B cell (primary cell): ENCODE measurements at regions of chr1 and their contacts with region 1.

Region 1: GRCh38 chr1:167430134-167430856 is 88.0 kb downstream of the CD247 start:
- DNase-seq: peak; percentile 57
- ATAC-seq: peak; percentile 40
- H3K4me3 ChIP-seq: peak overlapping the region in 2 of 5 experiments; percentile 16 to 25
- H3K4me3 Mint-ChIP-seq: peak overlapping the region; percentile 84
- H3K27ac ChIP-seq: peak overlapping the region; percentile 71
- H3K27ac Mint-ChIP-seq: peak overlapping the region; percentile 97
- H3K4me1 ChIP-seq: peaks cover 37 to 54% of the 10 kb centered on the region in 2 donors
- H3K4me1 Mint-ChIP-seq: peaks cover 50% of the 10 kb centered on the region
- H3K27me3 ChIP-seq: peaks cover 0 to under 1% (median under 1%) of the 10 kb centered on the region in 4 experiments
- H3K27me3 Mint-ChIP-seq: no peaks in the 10 kb centered on the region
- CTCF ChIP-seq: no peak

Region 2: GRCh38 chr1:167373398-167373797 is 56.9 kb before region 1 on chr1:
- CTCF ChIA-PET with region 1: no interaction called
- POLR2A ChIA-PET with region 1: no interaction called
- intact Hi-C with region 1: no loop called
- DNase-seq: no peak
- ATAC-seq: no peak
- H3K4me3 ChIP-seq: no peak overlapping the region
- H3K4me3 Mint-ChIP-seq: no peak overlapping the region
- H3K27ac ChIP-seq: peak overlapping the region in 1 of 2 donors; percentile 3
- H3K27ac Mint-ChIP-seq: no peak overlapping the region
- H3K4me1 ChIP-seq: no peaks in the 10 kb centered on the region
- H3K4me1 Mint-ChIP-seq: no peaks in the 10 kb centered on the region
- H3K27me3 ChIP-seq: no peaks in the 10 kb centered on the region
- H3K27me3 Mint-ChIP-seq: no peaks in the 10 kb centered on the region
- CTCF ChIP-seq: no peak

Region 3: DNA sequence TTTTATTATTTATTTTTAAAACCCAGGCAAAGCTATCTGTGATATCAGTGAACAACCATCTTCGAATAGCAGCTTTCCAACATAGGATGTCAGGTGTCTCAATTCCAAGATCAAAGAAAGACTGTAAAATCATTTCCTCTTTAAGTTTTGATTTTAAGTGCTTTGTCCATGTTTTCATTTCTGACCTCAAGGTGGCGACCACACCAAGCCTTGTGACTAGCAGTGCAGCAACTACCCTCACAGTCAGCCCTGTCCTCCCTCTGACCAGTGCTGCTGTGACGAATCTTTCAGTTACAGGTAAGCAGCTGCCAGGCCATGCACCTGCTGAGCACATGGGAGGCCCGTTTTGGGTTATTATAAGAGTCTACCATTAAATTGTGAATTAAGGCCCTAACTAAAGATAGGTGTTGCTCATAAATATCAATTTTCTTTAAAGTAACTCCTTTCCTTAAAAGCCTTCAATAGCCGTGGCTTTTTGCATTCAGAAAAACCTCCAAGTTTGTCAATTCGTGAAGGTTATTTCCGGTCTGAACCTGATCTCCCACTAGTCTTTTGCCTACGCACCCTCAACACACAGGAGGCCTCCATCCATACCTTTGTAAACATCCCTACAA is 28.9 kb before region 1 on chr1:
- CTCF ChIA-PET with region 1: interaction called, 30 read pairs
- POLR2A ChIA-PET with region 1: no interaction called
- intact Hi-C with region 1: no loop called
- DNase-seq: peak; percentile 70
- ATAC-seq: peak; percentile 76
- H3K4me3 ChIP-seq: no peak overlapping the region
- H3K4me3 Mint-ChIP-seq: no peak overlapping the region
- H3K27ac ChIP-seq: no peak overlapping the region
- H3K27ac Mint-ChIP-seq: peak overlapping the region; percentile 18
- H3K4me1 ChIP-seq: no peaks in the 10 kb centered on the region
- H3K4me1 Mint-ChIP-seq: no peaks in the 10 kb centered on the region
- H3K27me3 ChIP-seq: no peaks in the 10 kb centered on the region
- H3K27me3 Mint-ChIP-seq: no peaks in the 10 kb centered on the region
- CTCF ChIP-seq: peak; percentile 82

Region 4: GRCh38 chr1:167416506-167416905 is 13.8 kb before region 1 on chr1:
- CTCF ChIA-PET with region 1: interaction called, 7 read pairs
- POLR2A ChIA-PET with region 1: interaction called, 3 read pairs
- intact Hi-C with region 1: loop called (anchors 2 kb)
- DNase-seq: no peak
- ATAC-seq: no peak
- H3K4me3 ChIP-seq: no peak overlapping the region
- H3K4me3 Mint-ChIP-seq: no peak overlapping the region
- H3K27ac ChIP-seq: no peak overlapping the region
- H3K27ac Mint-ChIP-seq: no peak overlapping the region
- H3K4me1 ChIP-seq: peaks cover 7 to 13% of the 10 kb centered on the region in 2 donors
- H3K4me1 Mint-ChIP-seq: peaks cover 24% of the 10 kb centered on the region
- H3K27me3 ChIP-seq: no peaks in the 10 kb centered on the region
- H3K27me3 Mint-ChIP-seq: no peaks in the 10 kb centered on the region
- CTCF ChIP-seq: no peak

Region 5: DNA sequence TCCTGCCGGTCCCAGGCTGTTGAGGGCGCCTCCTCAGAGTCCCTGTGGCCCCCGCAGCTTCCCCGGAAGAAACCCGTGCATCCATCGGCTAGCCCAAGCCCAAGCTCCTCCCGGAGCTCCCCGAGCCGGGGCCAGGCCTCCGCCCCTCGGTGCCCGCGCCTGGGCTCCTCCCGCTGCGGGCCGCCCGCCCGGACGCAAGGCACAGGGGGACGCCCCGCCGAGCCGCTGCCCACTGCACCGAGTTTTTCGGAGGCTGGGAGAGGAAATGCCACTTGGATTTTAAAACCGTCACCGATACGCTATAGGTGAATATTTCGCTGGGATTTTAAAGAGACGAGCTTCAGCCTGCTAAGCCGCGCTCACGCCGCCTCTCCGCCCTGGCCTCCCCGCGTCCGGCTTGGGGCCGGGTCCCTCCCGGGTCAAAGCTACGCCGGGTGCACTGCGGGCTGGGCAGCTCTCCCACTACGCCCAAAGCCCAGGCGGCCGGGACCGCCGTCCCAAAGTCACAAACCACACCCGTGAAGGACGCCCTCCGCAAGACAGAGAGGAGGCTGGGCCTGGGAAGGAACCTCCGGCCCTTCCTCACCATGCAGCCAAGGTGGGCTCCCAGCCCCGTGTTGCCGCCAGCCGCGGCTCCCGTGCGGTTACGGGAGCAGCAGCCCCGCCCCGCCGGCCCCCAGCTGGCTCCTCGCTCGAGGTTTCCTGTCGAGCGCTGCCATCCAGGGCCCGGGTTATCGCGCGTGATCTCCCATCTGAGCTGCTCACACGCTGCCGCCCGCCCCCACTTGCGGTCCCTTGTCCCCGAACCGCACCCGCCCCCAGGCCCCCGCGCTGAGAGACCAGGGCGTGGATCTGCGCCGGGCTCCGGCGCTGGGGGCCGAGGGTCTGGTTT is 24.8 kb after region 1 on chr1:
- CTCF ChIA-PET with region 1: interaction called, 3 read pairs
- POLR2A ChIA-PET with region 1: no interaction called
- intact Hi-C with region 1: loop called (anchors 2 kb)
- DNase-seq: peak; percentile 78
- ATAC-seq: peak; percentile 78
- H3K4me3 ChIP-seq: peak overlapping the region; percentile 50 to 82 (median 77)
- H3K4me3 Mint-ChIP-seq: peak overlapping the region; percentile 79
- H3K27ac ChIP-seq: peak overlapping the region in 1 of 2 donors; percentile 66
- H3K27ac Mint-ChIP-seq: no peak overlapping the region
- H3K4me1 ChIP-seq: peaks cover 3 to 23% of the 10 kb centered on the region in 2 donors
- H3K4me1 Mint-ChIP-seq: peaks cover 14% of the 10 kb centered on the region
- H3K27me3 ChIP-seq: peaks cover 0 to 6% (median 0%) of the 10 kb centered on the region in 4 experiments
- H3K27me3 Mint-ChIP-seq: peaks cover 4% of the 10 kb centered on the region
- CTCF ChIP-seq: no peak

Region 6: GRCh38 chr1:167499664-167500101 is 69.4 kb after region 1 on chr1:
- CTCF ChIA-PET with region 1: no interaction called
- POLR2A ChIA-PET with region 1: no interaction called
- intact Hi-C with region 1: loop called (anchors 1 kb)
- DNase-seq: peak; percentile 88
- ATAC-seq: peak; percentile 98
- H3K4me3 ChIP-seq: peak overlapping the region in 1 of 5 experiments; percentile 34
- H3K4me3 Mint-ChIP-seq: peak overlapping the region; percentile 68
- H3K27ac ChIP-seq: no peak overlapping the region
- H3K27ac Mint-ChIP-seq: peak overlapping the region; percentile 18
- H3K4me1 ChIP-seq: peaks cover 39% of the 10 kb centered on the region in 2 donors
- H3K4me1 Mint-ChIP-seq: peaks cover 39% of the 10 kb centered on the region
- H3K27me3 ChIP-seq: peaks cover 0 to 66% (median 55%) of the 10 kb centered on the region in 4 experiments
- H3K27me3 Mint-ChIP-seq: peaks cover 75% of the 10 kb centered on the region
- CTCF ChIP-seq: no peak